B cell (primary cell): ENCODE measurements at regions of chr5 and their contacts with region 1.

Region 1: DNA sequence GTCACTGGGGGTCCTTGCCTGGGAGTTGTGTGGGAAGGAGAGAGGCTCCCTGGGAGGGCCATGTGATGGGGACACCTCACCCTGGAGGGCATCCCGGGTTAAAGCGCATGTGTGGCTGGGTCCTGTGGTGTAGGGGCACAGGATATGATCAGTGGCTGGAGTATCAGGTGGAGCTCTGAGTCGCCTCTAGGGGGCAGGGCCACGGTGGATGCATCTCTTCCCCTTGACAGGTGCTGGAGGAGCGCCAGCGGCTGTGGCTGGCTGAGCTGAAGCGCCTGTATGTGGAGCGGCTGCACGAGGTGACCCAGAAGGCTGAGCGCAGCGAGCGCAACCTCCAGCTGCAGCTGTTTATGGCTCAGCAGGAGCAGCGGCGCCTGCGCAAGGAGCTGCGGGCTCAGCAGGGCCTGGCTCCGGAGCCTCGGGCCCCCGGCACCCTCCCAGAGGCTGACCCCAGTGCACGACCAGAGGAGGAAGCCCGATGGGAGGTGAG is 7.6 kb downstream of the N4BP3 start:
- DNase-seq: peak; percentile 88
- ATAC-seq: peak; percentile 50
- H3K4me3 ChIP-seq: peak overlapping the region in 4 of 5 experiments; percentile 18 to 34 (median 32)
- H3K4me3 Mint-ChIP-seq: peak overlapping the region; percentile 82
- H3K27ac ChIP-seq: peak overlapping the region in 1 of 2 donors; percentile 26
- H3K27ac Mint-ChIP-seq: peak overlapping the region; percentile 88
- H3K4me1 ChIP-seq: peaks cover 65 to 68% of the 10 kb centered on the region in 2 donors
- H3K4me1 Mint-ChIP-seq: peaks cover 68% of the 10 kb centered on the region
- H3K27me3 ChIP-seq: no peaks in the 10 kb centered on the region
- H3K27me3 Mint-ChIP-seq: no peaks in the 10 kb centered on the region
- CTCF ChIP-seq: peak; percentile 80

Region 2: GRCh38 chr5:177982072-177982727 is 138.7 kb before region 1 on chr5:
- CTCF ChIA-PET with region 1: no interaction called
- POLR2A ChIA-PET with region 1: no interaction called
- intact Hi-C with region 1: no loop called
- DNase-seq: peak; percentile 29
- ATAC-seq: no peak
- H3K4me3 ChIP-seq: no peak overlapping the region
- H3K4me3 Mint-ChIP-seq: no peak overlapping the region
- H3K27ac ChIP-seq: no peak overlapping the region
- H3K27ac Mint-ChIP-seq: no peak overlapping the region
- H3K4me1 ChIP-seq: peaks cover 8 to 21% of the 10 kb centered on the region in 2 donors
- H3K4me1 Mint-ChIP-seq: peaks cover 2% of the 10 kb centered on the region
- H3K27me3 ChIP-seq: peaks cover 0 to 59% (median 29%) of the 10 kb centered on the region in 4 experiments
- H3K27me3 Mint-ChIP-seq: peaks cover 54% of the 10 kb centered on the region
- CTCF ChIP-seq: no peak

Region 3: DNA sequence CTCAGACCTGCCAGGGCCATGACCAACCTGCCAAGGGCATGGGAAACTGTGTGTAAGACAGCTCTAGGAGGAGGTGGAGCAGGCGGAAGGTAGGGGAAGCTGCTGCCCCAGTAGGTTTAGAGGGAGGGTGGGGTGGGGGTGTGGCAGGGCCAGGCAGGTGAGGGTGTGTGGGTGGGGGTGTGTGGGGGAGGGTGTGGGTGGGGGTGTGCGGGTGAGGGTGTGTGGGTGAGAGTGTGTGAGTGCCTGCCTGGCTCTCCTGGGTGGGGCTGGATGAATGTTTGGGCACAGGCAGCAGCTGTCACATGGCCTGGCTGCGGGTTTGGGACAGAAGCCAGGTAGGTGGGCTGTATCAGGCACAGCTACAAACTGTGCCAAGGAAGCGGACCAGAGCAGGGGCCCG is 16.4 kb before region 1 on chr5:
- CTCF ChIA-PET with region 1: interaction called, 17 read pairs
- POLR2A ChIA-PET with region 1: interaction called, 4 read pairs
- intact Hi-C with region 1: no loop called
- DNase-seq: no peak
- ATAC-seq: no peak
- H3K4me3 ChIP-seq: no peak overlapping the region
- H3K4me3 Mint-ChIP-seq: no peak overlapping the region
- H3K27ac ChIP-seq: no peak overlapping the region
- H3K27ac Mint-ChIP-seq: no peak overlapping the region
- H3K4me1 ChIP-seq: peaks cover 16 to 28% of the 10 kb centered on the region in 2 donors
- H3K4me1 Mint-ChIP-seq: peaks cover 31% of the 10 kb centered on the region
- H3K27me3 ChIP-seq: no peaks in the 10 kb centered on the region
- H3K27me3 Mint-ChIP-seq: no peaks in the 10 kb centered on the region
- CTCF ChIP-seq: no peak